Adrenal gland (tissue), 19 donors: ENCODE measurements at regions of chr1 and their contacts with region 1.

Region 1: GRCh38 chr1:27300341-27301051 is 21.5 kb upstream of the TMEM222 start:
- DNase-seq: peak; percentile 78 to 95 (median 86)
- H3K4me3 ChIP-seq: no peak overlapping the region
- H3K27ac ChIP-seq: peak overlapping the region in 4 of 5 donors; percentile 20 to 89 (median 66)
- H3K4me1 ChIP-seq: peaks cover 0 to 29% of the 10 kb centered on the region in 2 donors
- H3K27me3 ChIP-seq: no peaks in the 10 kb centered on the region
- CTCF ChIP-seq: peak; percentile 95 to 99 (median 98)
- POLR2A ChIP-seq: no peak

Region 2: DNA sequence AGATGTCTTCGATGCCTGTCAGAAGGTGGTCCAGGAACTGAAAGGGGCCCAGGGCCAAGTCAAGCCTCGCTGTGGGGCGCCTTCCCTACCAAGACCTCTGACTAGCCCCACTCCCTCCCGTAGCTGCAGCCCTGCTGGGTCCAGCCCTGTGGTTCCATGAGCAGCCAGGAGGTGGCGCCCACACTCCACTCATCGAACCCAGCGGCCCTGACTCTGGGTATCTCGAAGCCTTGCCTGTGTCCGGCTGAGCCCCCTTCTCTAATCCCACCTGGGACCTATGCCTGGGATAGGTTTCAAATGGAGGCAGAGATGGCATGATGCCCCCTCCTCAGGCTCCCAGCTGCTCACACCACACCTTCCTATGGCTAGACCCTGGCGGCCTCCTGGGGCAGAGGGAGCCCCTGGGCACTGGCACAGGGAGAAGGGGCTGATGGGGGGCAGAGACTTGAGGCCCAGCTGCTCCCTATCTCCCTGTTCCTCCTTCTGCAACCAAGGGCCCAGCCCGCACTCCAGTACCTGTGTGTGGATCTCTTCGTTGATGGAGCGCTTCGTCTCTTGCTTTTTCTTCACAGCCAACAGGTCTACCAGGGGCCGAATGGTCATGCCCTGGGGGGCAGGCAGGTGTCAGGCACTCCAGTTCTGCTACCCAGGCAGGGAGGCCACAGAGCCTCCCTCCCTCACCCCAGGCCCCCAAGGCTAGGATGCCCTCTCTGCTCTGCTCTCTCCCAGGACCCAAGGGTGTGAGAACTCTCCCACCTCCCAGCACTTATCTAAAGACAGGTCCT is 197.6 kb before region 1 on chr1:
- intact Hi-C with region 1: loop called in 1 of 2 experiments (anchors 5 kb)
- DNase-seq: peak; percentile 65 to 93 (median 78)
- H3K4me3 ChIP-seq: no peak overlapping the region
- H3K27ac ChIP-seq: no peak overlapping the region
- H3K4me1 ChIP-seq: peaks cover 6 to 14% of the 10 kb centered on the region in 2 donors
- H3K27me3 ChIP-seq: no peaks in the 10 kb centered on the region
- CTCF ChIP-seq: peak; percentile 95 to 99 (median 96)
- POLR2A ChIP-seq: no peak

Region 3: DNA sequence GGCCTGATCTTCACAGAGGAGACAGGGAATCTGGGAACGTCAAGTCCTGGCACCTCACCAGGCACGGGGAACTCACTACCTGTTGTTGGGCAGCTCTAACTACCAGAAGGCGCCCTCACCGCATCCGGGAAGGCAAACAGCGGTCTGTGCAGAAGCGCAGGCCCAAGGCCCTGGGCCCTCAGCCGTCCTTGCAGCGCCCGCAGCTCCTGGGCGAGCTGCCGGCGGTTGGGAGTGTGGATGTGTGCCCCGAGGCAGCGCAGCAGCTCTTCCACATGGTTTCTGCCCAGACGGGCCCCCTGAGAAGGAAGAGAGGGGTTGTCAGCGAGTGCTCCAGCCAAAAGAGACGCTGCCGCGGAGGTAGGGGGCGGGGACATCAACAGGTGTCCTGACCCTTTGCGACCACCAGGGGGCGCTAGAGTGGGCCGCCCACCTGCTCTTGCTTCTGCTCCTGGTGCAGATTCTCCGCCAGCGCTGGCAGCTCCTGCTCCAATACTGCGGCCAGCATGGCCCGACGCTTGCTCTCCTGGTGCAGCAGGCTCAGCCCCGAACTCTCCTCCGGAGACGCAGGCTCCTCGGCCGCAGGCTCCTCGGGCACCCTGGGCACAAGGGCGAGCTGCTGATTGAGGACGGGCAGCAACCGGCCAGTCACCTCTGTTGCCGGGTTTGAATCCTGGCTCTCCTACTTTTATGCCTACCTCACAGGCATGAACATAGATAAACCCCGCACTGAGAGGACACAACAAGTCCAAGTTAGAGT is 57.0 kb after region 1 on chr1:
- intact Hi-C with region 1: loop called in 1 of 2 experiments (anchors 10 kb)
- DNase-seq: peak; percentile 70 to 89 (median 82)
- H3K4me3 ChIP-seq: peak overlapping the region in 1 of 4 donors; percentile 14
- H3K27ac ChIP-seq: no peak overlapping the region
- H3K4me1 ChIP-seq: peaks cover 0 to 5% of the 10 kb centered on the region in 2 donors
- H3K27me3 ChIP-seq: no peaks in the 10 kb centered on the region
- CTCF ChIP-seq: peak; percentile 92 to 99 (median 98)
- POLR2A ChIP-seq: no peak

Region 4: GRCh38 chr1:27381969-27382762 is 81.7 kb after region 1 on chr1:
- intact Hi-C with region 1: no loop called
- DNase-seq: no peak
- H3K4me3 ChIP-seq: no peak overlapping the region
- H3K27ac ChIP-seq: no peak overlapping the region
- H3K4me1 ChIP-seq: peaks cover 10% of the 10 kb centered on the region in 2 donors
- H3K27me3 ChIP-seq: no peaks in the 10 kb centered on the region
- CTCF ChIP-seq: no peak
- POLR2A ChIP-seq: no peak

Region 5: GRCh38 chr1:27392096-27392777 is 91.7 kb after region 1 on chr1 and contains the start of gene GPR3:
- intact Hi-C with region 1: loop called (anchors 2 to 5 kb)
- DNase-seq: peak; percentile 87 to 96 (median 93)
- H3K4me3 ChIP-seq: peak within 1 kb of the TSS in 1 of 4 donors; percentile 60
- H3K27ac ChIP-seq: peak within 1 kb of the TSS in 3 of 5 donors; percentile 14 to 76 (median 57)
- H3K4me1 ChIP-seq: peaks cover 11 to 16% of the 10 kb centered on the region in 2 donors
- H3K27me3 ChIP-seq: no peaks in the 10 kb centered on the region
- CTCF ChIP-seq: peak in 4 of 6 experiments; percentile 24 to 39 (median 36)
- POLR2A ChIP-seq: peak in 1 of 2 donors; percentile 31
- total RNA-seq, gene GPR3: 0.17 to 2.0 (median 0.66) TPM in 4 of 9 donors, not detected in the others

Region 6: DNA sequence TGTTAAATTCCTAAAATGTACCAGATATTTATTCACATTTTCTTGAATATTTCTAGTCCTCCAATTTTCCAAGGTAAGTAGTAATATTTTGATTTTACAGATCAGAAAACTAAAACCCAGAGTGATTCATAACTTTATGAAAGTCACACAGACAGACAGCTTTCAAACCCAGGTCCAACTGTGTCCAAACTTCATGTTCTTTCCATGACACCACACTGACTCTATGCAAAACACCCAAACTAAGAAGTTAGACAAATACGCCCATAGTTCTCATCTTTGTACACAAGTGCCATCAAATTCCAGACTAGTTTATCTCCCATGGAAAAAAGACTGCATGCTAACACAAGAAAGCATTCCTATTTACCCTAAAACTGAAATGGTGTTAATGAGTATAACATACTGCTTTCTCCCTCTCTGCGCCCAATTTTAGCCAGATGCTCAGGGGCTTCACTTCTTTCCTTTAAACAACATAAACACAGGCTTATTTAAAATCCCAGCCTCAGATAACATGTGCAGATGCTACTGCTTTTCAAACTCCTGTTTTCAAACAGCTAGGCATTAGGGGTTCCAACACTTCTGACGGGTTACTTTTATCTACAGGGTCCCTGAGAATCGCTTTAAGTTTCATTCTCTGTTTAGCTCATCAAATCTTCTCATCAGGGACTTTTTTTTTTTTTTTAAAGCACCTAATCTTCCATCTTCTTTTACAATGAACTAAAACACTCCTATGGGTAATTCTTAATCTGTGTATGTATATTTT is 144.9 kb after region 1 on chr1:
- intact Hi-C with region 1: no loop called
- DNase-seq: no peak
- H3K4me3 ChIP-seq: no peak overlapping the region
- H3K27ac ChIP-seq: no peak overlapping the region
- H3K4me1 ChIP-seq: peaks cover 8 to 46% of the 10 kb centered on the region in 2 donors
- H3K27me3 ChIP-seq: no peaks in the 10 kb centered on the region
- CTCF ChIP-seq: no peak
- POLR2A ChIP-seq: no peak

Region 7: DNA sequence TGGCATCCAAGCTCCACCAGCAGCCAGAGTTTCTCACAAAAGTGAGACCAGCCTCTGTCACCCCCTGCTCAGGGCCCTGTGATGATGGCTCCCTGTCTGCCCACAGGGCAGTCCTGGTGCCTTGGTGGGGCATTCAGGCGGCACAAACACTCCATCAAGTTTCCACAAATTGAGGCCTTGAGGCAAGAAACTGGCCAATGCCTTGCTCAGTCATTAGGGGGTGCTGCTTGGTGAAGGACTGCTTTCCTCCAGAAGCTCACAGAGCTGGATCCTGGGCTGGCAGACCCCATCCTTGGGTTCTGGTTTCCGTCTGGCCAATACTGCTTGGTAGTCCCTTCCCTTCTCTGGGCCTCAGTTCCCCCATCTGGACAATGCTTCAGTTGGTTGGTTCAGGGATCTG is 315.9 kb after region 1 on chr1:
- intact Hi-C with region 1: loop called (anchors 10 kb)
- DNase-seq: no peak
- H3K4me3 ChIP-seq: no peak overlapping the region
- H3K27ac ChIP-seq: no peak overlapping the region
- H3K4me1 ChIP-seq: peaks cover 6% of the 10 kb centered on the region in 2 donors
- H3K27me3 ChIP-seq: no peaks in the 10 kb centered on the region
- CTCF ChIP-seq: no peak
- POLR2A ChIP-seq: no peak